ENCODE measurements at regions of chr13 and their contacts with region 1.

Region 1: DNA sequence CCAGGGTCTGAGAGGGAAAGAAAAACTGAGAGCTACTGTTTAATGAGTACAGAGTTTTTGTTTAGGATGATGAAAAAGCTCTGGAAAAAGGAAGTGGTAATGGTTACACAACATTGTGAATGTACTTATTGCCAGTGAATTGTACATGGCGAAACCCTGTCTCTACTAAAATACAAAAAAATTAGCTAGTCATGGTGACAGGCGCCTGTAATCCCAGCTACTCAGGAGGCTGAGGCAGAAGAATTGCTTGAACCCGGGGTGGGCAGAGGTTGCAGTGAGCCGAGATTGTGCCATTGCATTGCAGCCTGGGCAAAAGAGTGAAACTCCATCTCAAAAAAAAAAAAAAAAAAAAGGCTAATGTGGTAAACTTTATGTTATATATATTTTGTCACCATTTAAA is 96.3 kb downstream of the VWA8 start:
- DNase-seq: no peak
- H3K4me3 ChIP-seq: no peak overlapping the region
- H3K27ac ChIP-seq: no peak overlapping the region
- H3K4me1 ChIP-seq: no peaks in the 10 kb centered on the region
- CTCF ChIP-seq: no peak

Region 2: GRCh38 chr13:41077475-41077874 is 787.2 kb before region 1 on chr13:
- CTCF ChIA-PET with region 1: no interaction called
- POLR2A ChIA-PET with region 1: no interaction called
- intact Hi-C with region 1: no loop called
- DNase-seq: no peak
- H3K4me3 ChIP-seq: no peak overlapping the region
- H3K27ac ChIP-seq: no peak overlapping the region
- H3K4me1 ChIP-seq: no peaks in the 10 kb centered on the region
- CTCF ChIP-seq: no peak

Region 3: DNA sequence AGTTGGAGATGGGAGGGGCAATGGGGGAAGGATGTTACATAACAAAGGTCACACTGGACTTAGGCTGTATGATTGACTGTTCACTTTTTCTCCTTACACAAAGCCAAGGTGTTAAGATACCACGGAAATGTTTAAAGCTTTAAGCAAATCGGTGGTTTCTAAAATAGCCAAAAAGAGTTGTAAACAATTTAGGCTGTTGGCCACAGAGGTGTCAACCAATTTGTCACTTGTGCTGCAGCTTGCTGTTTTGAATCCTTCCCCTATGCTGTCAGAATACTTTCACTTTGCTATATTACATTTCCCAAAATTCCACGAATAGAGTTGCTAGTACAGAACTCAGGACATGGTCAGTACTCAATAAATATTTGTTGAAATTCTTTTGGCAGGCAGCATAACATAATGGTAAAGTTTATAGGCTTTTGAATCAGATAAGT is 53.1 kb before region 1 on chr13:
- CTCF ChIA-PET with region 1: no interaction called
- POLR2A ChIA-PET with region 1: no interaction called
- intact Hi-C with region 1: no loop called
- DNase-seq: no peak
- H3K4me3 ChIP-seq: no peak overlapping the region
- H3K27ac ChIP-seq: no peak overlapping the region
- H3K4me1 ChIP-seq: peaks cover 13% of the 10 kb centered on the region
- CTCF ChIP-seq: no peak

Region 4: DNA sequence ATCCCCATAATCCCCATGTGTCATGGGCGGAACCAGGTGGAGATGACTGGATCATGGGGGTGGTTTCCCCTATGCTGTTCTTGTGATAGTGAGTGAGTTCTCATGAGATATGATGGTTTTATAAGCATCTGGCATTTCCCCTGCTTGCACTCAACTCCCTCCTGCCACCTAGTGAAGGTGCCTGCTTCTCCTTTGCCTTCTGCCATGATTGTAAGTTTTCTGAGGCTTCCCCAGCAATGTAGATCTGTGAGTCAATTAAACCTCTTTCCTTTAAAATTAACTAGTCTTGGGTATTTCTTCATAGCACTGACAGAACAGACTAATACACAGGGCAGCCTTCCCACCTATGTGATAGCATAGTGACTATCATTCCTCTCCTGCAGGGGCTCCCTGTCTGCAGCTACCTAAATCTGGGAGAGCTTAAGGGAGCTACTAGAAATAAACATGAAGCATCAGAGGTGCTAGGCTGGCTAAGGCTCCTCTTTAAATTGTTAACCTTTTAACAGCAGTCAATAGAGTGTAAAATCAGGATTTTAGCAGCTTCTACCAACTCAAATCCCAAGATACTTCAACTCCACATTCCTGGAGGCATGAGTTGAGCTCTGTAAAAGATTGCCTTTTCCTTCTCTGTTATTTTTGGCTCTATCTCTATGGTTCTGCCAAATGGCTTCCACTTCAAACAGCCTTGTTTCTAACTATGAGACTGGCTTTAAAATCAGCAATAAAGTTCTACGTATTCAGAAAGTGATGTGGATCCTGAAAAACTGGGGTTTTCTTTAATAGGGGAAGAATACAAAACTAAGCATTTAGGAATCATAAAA is 16.0 kb before region 1 on chr13:
- CTCF ChIA-PET with region 1: no interaction called
- POLR2A ChIA-PET with region 1: interaction called, 4 read pairs
- intact Hi-C with region 1: loop called (anchors 1 kb)
- DNase-seq: no peak
- H3K4me3 ChIP-seq: no peak overlapping the region
- H3K27ac ChIP-seq: no peak overlapping the region
- H3K4me1 ChIP-seq: no peaks in the 10 kb centered on the region
- CTCF ChIP-seq: 0 out of 2 replicates have a peak, but pooled peaks have one; percentile 41

Region 5: GRCh38 chr13:41973247-41973741 is 108.6 kb after region 1 on chr13:
- CTCF ChIA-PET with region 1: no interaction called
- POLR2A ChIA-PET with region 1: no interaction called
- intact Hi-C with region 1: no loop called
- DNase-seq: no peak
- H3K4me3 ChIP-seq: no peak overlapping the region
- H3K27ac ChIP-seq: no peak overlapping the region
- H3K4me1 ChIP-seq: peaks cover 7% of the 10 kb centered on the region
- CTCF ChIP-seq: no peak

Measured in OCI-LY7 (cell line).